Activated CD8-positive, alpha-beta memory T cell treated with anti-CD3 and anti-CD28 coated beads, Interleukin-2, amount 10 ng/mL, durations not matched to agents 7 days and 5 days (primary cell): ENCODE measurements at regions of chr1 and their contacts with region 1.

Region 1: DNA sequence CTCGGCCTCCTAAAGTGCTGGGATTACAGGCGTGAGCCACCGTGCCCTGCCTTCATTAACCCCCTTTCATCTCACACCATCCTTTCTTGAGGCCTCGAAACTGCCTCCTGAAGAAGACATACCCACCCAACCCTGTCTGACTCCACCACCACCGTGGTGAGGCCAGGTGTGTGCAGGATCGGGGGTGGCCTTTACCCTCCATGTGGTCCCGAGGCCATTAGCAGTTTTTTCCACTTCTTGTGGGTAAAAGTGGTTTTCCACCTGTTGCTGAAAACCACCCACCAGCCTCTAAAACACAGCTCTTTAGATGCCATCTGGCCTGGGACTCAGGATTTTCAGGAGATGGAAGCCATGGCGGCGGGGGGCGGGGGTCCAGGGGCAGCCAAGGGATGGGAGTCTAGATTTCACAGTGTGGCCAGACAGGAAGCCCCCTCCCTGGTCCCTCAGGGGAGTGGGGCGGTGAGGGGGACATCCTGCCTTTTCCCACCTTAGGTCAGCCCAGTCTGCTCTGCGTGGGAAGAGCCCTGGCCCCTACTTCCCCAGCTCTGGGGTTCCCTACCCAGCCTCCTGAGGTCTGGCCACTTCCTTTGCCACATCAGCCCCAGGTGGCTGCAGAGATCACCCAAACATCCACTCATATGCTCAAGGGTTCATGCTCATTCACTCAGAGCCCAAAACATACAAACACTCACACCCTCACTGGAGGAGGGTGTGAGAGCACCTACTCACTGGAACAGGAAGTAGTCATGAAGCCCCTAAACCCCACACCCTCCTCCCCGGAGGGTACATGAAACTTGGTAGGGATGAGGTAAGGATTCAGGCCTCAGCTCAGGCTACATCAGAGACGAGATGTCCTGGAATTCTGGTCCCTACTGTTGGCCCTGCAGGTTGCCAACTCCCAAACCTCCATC is 2.3 kb downstream of the FGR start:
- DNase-seq: peak; percentile 85
- ATAC-seq: peak; percentile 74
- H3K4me3 Mint-ChIP-seq: peak overlapping the region; percentile 37
- H3K27ac Mint-ChIP-seq: peak overlapping the region; percentile 82
- H3K4me1 Mint-ChIP-seq: peaks cover 71% of the 10 kb centered on the region
- H3K27me3 Mint-ChIP-seq: peaks cover 9% of the 10 kb centered on the region

Region 2: DNA sequence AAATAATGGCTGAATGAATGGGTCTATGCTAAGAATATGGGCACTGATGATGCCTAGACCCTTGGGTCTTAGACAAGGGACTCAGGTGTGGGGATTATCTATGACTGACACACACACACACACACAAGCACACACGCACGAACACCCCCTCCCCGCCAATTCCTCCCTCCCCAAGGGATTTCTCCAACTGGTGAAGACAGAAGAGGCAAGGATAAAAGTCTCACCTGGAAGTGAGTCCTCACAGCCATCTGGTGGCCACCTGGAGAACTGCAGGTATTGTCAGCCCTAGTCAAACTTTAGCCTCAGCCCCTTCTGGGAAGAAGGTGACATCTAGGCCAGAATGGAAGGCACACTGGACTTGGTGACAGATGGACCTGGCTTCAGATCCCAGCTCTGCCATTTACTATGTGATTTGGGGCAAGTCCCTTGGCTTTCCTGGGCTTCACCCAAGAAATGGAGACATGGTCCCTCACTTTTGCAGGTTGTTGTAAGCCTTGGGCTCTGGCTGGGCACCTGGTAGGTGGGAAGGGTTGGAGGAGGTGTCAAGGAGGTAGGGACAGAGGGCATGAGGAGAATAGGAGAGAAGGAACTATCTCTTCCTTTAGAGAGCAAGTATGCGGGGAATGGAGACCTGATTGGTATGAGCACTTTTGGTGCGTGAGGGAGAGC is 244.2 kb before region 1 on chr1:
- CTCF ChIA-PET with region 1: no interaction called
- DNase-seq: peak; percentile 83
- ATAC-seq: no peak
- H3K4me3 Mint-ChIP-seq: no peak overlapping the region
- H3K27ac Mint-ChIP-seq: no peak overlapping the region
- H3K4me1 Mint-ChIP-seq: peaks cover 8% of the 10 kb centered on the region
- H3K27me3 Mint-ChIP-seq: peaks cover 25% of the 10 kb centered on the region

Region 3: GRCh38 chr1:27609210-27609555 is 23.5 kb before region 1 on chr1:
- CTCF ChIA-PET with region 1: interaction called, 15 read pairs
- DNase-seq: no peak
- ATAC-seq: peak; percentile 28
- H3K4me3 Mint-ChIP-seq: no peak overlapping the region
- H3K27ac Mint-ChIP-seq: no peak overlapping the region
- H3K4me1 Mint-ChIP-seq: peaks cover 21% of the 10 kb centered on the region
- H3K27me3 Mint-ChIP-seq: no peaks in the 10 kb centered on the region

Region 4: DNA sequence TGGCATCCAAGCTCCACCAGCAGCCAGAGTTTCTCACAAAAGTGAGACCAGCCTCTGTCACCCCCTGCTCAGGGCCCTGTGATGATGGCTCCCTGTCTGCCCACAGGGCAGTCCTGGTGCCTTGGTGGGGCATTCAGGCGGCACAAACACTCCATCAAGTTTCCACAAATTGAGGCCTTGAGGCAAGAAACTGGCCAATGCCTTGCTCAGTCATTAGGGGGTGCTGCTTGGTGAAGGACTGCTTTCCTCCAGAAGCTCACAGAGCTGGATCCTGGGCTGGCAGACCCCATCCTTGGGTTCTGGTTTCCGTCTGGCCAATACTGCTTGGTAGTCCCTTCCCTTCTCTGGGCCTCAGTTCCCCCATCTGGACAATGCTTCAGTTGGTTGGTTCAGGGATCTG is 16.2 kb before region 1 on chr1:
- CTCF ChIA-PET with region 1: interaction called, 15 read pairs
- DNase-seq: no peak
- ATAC-seq: no peak
- H3K4me3 Mint-ChIP-seq: no peak overlapping the region
- H3K27ac Mint-ChIP-seq: no peak overlapping the region
- H3K4me1 Mint-ChIP-seq: peaks cover 40% of the 10 kb centered on the region
- H3K27me3 Mint-ChIP-seq: no peaks in the 10 kb centered on the region

Region 5: DNA sequence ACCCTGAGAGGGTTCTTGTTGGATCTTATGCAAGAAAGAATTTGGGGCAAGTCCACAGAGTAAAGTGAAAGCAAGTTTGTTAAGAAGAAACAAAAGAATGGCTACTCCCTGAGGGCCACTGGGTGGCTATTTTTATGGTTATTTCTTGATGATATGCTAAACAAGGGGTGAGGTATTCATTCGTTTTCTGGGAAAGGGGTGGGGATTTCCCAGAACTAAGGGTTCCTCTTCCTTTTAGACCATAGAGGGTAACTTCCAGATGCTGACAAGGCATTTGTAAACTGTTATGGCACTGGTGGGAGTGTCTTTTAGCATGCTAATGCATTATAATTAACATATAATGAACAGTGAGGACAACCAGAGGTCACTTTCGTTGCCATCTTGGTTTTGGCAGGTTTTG is 57.5 kb after region 1 on chr1:
- CTCF ChIA-PET with region 1: no interaction called
- DNase-seq: no peak
- ATAC-seq: no peak
- H3K4me3 Mint-ChIP-seq: no peak overlapping the region
- H3K27ac Mint-ChIP-seq: peak overlapping the region; percentile 16
- H3K4me1 Mint-ChIP-seq: peaks cover 16% of the 10 kb centered on the region
- H3K27me3 Mint-ChIP-seq: peaks cover 11% of the 10 kb centered on the region

Region 6: GRCh38 chr1:27713139-27713725 is 80.6 kb after region 1 on chr1:
- CTCF ChIA-PET with region 1: no interaction called
- DNase-seq: no peak
- ATAC-seq: no peak
- H3K4me3 Mint-ChIP-seq: no peak overlapping the region
- H3K27ac Mint-ChIP-seq: no peak overlapping the region
- H3K4me1 Mint-ChIP-seq: no peaks in the 10 kb centered on the region
- H3K27me3 Mint-ChIP-seq: peaks cover 25% of the 10 kb centered on the region